GM12878 (cell line): ENCODE measurements at regions of chr6 and their contacts with region 1.

Region 1: DNA sequence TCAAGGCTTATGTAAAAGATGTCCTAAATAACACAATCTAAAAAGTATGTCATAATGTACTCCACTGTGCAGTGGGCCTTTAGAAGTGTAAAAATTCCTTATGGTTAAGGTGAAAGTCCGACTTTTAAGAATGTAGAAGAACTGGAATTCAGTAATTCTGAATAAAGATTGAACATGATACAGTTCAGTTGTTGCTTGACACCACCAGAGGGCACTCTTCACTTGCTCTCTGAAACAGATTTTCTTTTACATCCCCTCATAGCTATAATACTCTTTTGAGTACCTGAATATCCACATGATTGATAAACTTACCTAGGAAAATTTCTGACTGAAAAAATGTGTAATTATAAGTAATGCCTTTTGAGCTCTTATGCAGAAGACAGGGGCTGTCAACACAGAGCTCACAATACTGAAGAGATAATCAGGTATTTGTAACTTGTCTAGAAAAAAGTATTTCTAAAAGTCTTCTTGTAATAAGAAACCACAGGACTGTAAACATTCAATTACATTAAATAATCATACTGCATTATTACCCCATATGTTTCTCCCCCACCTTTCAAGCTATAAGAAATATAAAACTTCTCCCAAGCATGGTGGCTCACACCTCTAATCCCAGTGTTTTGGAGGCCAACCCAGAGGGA is 92.1 kb downstream of the POPDC3 start:
- DNase-seq: peak; percentile 17
- ATAC-seq: peak; percentile 82
- H3K4me3 ChIP-seq: no peak overlapping the region
- H3K27ac ChIP-seq: no peak overlapping the region
- H3K4me1 ChIP-seq: no peaks in the 10 kb centered on the region
- H3K27me3 ChIP-seq: no peaks in the 10 kb centered on the region
- CTCF ChIP-seq: peak; percentile 71 to 87 (median 77); a peak in 5 of 6 replicates
- EP300 ChIP-seq: no peak
- POLR2A ChIP-seq: no peak
- RAD21 ChIP-seq: peak; percentile 92

Region 2: DNA sequence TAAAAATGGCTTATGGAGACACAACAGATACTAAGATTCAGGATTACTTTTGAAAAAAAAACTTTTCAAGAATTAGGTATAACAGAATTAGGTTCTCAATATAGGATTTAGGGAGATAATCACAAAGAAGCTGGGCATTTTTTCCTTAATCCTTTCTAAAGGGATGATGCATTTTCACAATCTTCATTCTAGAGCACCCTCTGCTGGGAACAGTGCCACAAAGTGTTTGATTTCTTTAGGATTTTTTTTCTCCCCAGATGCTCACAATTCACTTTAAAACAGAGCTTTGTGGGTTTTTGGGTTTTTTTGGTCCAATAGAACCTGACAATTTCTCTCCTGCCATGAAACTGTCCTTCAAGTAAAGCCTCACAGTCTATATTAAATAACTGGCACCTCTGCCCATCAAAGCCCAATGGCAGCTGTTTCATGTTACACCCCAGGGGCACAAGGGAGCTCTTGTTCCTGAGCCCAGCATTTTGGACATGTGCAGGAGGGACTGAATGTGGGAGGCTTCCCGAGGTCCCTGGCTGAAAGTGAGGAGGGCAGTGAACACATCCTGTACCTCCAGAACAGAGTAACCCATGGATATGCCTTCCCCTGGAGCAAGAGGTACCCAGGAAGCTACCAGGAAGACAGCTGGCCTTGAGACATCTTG is 275.5 kb after region 1 on chr6:
- CTCF ChIA-PET with region 1: interaction called, 3 read pairs
- POLR2A ChIA-PET with region 1: interaction called, 6 read pairs
- RAD21 ChIA-PET with region 1: interaction called, 12 read pairs
- SMC1A ChIA-PET with region 1: interaction called, 3 read pairs
- in situ Hi-C with region 1: no loop called
- intact Hi-C with region 1: loop called (anchors 5 kb)
- DNase-seq: no peak
- ATAC-seq: no peak
- H3K4me3 ChIP-seq: no peak overlapping the region
- H3K27ac ChIP-seq: no peak overlapping the region
- H3K4me1 ChIP-seq: no peaks in the 10 kb centered on the region
- H3K27me3 ChIP-seq: no peaks in the 10 kb centered on the region
- CTCF ChIP-seq: peak in 2 of 3 experiments; percentile 4 to 21; a peak in 1 of 6 replicates
- EP300 ChIP-seq: no peak
- POLR2A ChIP-seq: no peak
- RAD21 ChIP-seq: peak; percentile 24; the same call in 1 of the 2 replicates

Region 3: DNA sequence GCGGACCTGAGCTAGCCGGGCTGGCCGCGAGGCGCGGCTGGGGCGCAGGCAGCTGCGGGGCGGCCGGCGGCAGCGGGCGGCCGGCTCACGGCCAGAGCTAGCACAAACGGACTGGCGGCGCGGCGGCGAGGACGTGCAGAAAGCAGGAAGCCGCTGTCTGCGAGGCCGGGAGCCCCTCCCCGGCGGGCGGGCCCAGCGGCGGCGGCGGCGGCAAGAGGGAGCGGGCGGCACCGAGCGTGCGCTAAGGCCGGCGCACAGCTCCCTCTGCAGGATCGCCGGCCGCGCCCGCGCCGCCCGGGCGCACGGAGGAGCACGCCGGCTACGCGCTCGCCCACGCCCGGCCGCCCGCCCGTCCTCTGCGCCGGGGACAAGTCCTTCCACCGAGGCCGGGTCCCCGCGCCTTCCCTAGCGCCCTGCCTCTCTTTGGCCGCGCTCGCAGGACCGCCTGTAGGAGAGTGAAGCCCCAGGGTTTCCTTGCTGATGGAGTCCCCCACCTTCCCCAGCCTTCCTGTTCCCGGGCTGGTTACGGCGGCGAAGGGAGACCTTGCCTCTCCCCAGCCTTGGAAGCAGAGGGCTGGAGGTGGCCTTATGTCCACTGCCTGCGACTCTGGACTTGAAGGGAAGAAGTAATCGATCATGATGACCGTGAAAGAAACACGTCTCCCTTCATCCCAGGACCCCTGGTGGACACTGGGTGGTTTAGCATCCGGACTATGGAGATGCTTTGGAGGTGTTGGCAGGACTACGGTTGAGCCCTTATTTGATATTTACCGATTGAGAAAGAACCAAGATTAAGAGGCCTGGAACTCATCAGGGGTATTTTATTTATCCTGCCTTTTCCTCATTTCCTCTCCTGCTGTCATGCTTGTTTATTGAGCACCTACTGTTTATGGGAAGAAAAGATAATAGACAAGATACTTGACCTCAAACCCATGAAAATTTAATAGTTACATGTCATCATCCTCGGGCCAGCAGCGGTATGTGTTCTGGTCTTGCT is 315.5 kb after region 1 on chr6 and contains the start of gene PREP:
- CTCF ChIA-PET with region 1: interaction called, 14 read pairs
- POLR2A ChIA-PET with region 1: no interaction called
- RAD21 ChIA-PET with region 1: interaction called, 12 read pairs
- SMC1A ChIA-PET with region 1: interaction called, 13 read pairs
- in situ Hi-C with region 1: no loop called
- intact Hi-C with region 1: loop called (anchors 1 kb)
- DNase-seq: peak; percentile 28
- ATAC-seq: peak; percentile 94
- H3K4me3 ChIP-seq: peak within 1 kb of the TSS; percentile 100
- H3K27ac ChIP-seq: peak within 1 kb of the TSS; percentile 56
- H3K4me1 ChIP-seq: peaks cover 2% of the 10 kb centered on the region; the same call in 1 of the 2 replicates
- H3K27me3 ChIP-seq: no peaks in the 10 kb centered on the region; a peak in 1 of 4 replicates
- CTCF ChIP-seq: peak; percentile 71 to 88 (median 81)
- EP300 ChIP-seq: no peak
- POLR2A ChIP-seq: peak; percentile 81
- RAD21 ChIP-seq: peak; percentile 48
- polyA plus RNA-seq, gene PREP: 6.5 to 9.9 TPM

Region 4: DNA sequence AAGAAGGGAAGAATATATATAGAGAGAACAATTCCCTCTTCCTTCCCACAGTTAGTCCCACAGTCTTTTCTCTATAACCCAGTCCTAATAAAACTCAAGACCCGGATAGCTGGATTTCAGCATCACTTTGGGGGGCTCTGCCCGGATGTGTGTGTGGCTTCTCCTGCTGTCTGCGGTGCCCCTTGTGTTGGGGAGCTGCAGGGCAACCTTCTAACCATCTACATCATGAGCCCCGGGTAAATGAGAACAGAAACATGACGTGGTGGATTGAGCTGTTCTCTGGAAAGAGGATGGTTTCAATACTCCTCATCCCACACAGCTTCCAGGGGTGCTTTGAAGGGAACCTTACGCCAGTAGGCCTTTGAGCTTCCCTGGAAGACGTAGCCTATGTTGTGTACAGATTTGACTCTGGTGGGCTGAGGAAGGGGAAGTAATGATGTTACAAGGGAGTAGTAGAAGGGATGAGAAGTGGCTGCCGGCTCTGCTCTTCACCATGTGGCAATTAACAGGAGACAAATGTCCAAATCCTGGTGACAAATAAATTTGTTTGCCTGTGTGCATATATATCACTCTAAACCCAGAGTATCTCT is 984.9 kb after region 1 on chr6:
- CTCF ChIA-PET with region 1: no interaction called
- POLR2A ChIA-PET with region 1: no interaction called
- RAD21 ChIA-PET with region 1: no interaction called
- SMC1A ChIA-PET with region 1: no interaction called
- in situ Hi-C with region 1: loop called (anchors 10 kb)
- intact Hi-C with region 1: no loop called
- DNase-seq: no peak
- ATAC-seq: no peak
- H3K4me3 ChIP-seq: no peak overlapping the region
- H3K27ac ChIP-seq: no peak overlapping the region
- H3K4me1 ChIP-seq: no peaks in the 10 kb centered on the region
- H3K27me3 ChIP-seq: peaks cover 2 to 5% of the 10 kb centered on the region in 2 experiments; a peak in 2 of 4 replicates
- CTCF ChIP-seq: no peak
- EP300 ChIP-seq: no peak
- POLR2A ChIP-seq: no peak
- RAD21 ChIP-seq: no peak